Right ventricle myocardium superior (tissue), 1 donor: ENCODE measurements at regions of chrX and their contacts with region 1.

Region 1: GRCh38 chrX:19887911-19888879 is 795 bp upstream of the SH3KBP1 start:
- DNase-seq: peak; percentile 44
- ATAC-seq: peak; percentile 82

Region 2: DNA sequence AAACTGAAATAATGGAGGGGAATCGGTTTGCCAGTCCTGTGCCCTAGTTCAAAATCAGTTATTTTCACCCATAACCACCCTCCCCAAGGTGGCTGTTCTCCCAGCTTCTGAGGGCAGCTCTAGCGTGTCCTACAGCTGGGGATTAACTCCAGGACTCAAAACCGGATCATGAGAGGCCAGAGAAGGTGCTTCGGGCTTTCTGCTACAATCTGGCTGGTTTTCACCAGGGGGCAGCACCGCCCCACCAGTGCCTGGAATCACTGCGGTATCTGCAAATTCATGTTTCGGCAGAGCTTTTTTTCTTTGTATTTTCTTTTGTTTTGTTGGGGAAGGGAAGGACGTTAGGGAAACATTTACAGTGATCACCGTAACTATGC is 516.0 kb before region 1 on chrX:
- intact Hi-C with region 1: loop called (anchors 5 kb)
- DNase-seq: peak; percentile 67
- ATAC-seq: peak; percentile 92

Region 3: DNA sequence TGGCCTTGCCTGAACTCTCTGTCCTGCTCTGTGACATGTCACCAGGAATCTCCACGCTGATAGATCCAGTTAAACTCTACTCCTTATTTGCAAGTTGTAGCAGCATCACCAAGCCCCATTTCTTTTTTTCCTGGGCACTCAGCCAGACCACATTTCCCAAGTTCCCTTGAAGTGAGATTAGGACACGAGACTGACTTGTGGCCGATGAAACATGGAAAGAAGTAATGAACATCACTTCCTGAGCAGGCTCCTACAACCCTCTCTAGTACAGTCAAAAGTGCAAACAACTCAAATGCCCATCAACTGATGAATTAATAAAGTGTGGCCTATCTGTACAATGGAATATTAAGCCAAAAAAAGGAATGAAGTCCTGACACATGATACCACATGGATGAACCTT is 447.5 kb before region 1 on chrX:
- intact Hi-C with region 1: no loop called
- DNase-seq: no peak
- ATAC-seq: no peak

Region 4: GRCh38 chrX:19593690-19594089 is 294.5 kb before region 1 on chrX:
- intact Hi-C with region 1: loop called (anchors 5 kb)
- DNase-seq: no peak
- ATAC-seq: peak; percentile 69

Region 5: GRCh38 chrX:19739683-19740082 is 148.5 kb before region 1 on chrX:
- intact Hi-C with region 1: loop called (anchors 5 kb)
- DNase-seq: peak; percentile 57
- ATAC-seq: no peak